ENCODE measurements at regions of chr9 and their contacts with region 1.

Region 1: DNA sequence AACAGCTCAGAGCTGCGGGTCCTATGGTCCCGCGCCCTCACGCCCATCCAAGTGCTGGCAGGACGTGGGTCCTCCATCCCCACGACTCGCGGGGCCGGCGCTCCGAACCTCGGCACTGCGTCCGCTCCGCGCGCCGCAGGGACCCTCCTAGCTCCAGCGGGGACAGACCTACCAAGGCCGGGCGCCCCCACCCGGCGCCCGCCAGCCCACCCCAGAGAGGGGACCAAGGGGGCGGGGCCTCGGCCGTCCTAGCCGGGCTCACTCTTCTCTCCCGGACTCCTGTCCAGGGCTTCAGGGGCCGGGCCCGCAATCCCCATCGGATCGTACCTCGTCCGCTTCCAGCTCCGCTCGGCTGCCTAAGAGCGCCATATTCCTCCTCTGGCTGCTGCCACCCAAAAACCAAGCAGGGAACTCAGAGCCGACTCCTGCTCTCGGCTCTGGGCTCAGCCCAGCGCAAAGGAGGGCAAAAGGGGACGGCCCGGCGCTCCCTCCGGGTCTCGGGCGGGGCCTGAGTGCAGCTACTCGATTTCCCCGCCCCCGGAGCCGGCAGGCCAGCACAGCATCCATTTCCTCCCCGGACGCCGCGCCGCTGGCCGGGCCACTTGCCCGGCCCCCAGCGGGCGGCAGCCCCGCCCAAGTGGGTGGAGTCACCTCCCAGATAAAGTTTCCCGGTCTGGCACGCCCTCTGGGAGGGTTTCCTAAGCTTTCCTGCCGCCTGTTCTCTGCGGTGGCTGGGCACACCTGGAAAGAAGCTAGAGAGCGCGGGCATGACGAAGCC is at the start of gene TTC39B:
- DNase-seq: peak; percentile 72
- ATAC-seq: peak; percentile 86
- H3K4me3 ChIP-seq: peak within 1 kb of the TSS; percentile 59 to 95 (median 88)
- H3K4me3 Mint-ChIP-seq: peak within 1 kb of the TSS; percentile 96
- H3K27ac ChIP-seq: peak within 1 kb of the TSS; percentile 29 to 78
- H3K27ac Mint-ChIP-seq: peak within 1 kb of the TSS; percentile 89
- H3K4me1 ChIP-seq: peaks cover 25 to 33% of the 10 kb centered on the region in 2 donors
- H3K4me1 Mint-ChIP-seq: peaks cover 31% of the 10 kb centered on the region
- H3K27me3 ChIP-seq: no peaks in the 10 kb centered on the region
- H3K27me3 Mint-ChIP-seq: peaks cover 3% of the 10 kb centered on the region
- CTCF ChIP-seq: no peak
- total RNA-seq, gene TTC39B: 3.6 and 3.8 TPM in 2 replicates

Region 2: DNA sequence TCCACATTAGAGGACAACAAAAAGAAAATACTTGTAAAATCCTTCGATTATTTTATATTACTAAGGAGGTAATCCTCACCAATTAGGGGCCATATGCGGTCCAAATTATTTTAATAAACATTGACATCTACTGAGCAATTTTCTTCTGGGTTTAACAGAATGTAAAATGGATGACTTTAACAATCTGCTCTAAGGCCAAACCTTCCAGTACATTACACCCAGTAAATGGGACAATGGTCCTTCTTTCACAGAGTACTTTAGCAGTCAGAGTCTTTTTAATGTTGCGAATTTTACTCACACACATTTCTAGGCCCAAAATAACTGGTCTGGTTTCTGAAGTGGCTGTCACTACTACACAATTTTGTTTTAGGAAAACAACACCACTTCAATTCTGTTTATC is 106.8 kb before region 1 on chr9:
- CTCF ChIA-PET with region 1: no interaction called
- POLR2A ChIA-PET with region 1: no interaction called
- intact Hi-C with region 1: no loop called
- DNase-seq: no peak
- ATAC-seq: no peak
- H3K4me3 ChIP-seq: no peak overlapping the region
- H3K4me3 Mint-ChIP-seq: no peak overlapping the region
- H3K27ac ChIP-seq: no peak overlapping the region
- H3K27ac Mint-ChIP-seq: no peak overlapping the region
- H3K4me1 ChIP-seq: no peaks in the 10 kb centered on the region
- H3K4me1 Mint-ChIP-seq: no peaks in the 10 kb centered on the region
- H3K27me3 ChIP-seq: no peaks in the 10 kb centered on the region
- H3K27me3 Mint-ChIP-seq: no peaks in the 10 kb centered on the region
- CTCF ChIP-seq: no peak

Region 3: GRCh38 chr9:15277400-15278090 is 29.4 kb before region 1 on chr9:
- CTCF ChIA-PET with region 1: interaction called, 14 read pairs
- POLR2A ChIA-PET with region 1: no interaction called
- intact Hi-C with region 1: no loop called
- DNase-seq: peak; percentile 54
- ATAC-seq: no peak
- H3K4me3 ChIP-seq: no peak overlapping the region
- H3K4me3 Mint-ChIP-seq: no peak overlapping the region
- H3K27ac ChIP-seq: no peak overlapping the region
- H3K27ac Mint-ChIP-seq: no peak overlapping the region
- H3K4me1 ChIP-seq: peaks cover 0 to 3% of the 10 kb centered on the region in 2 donors
- H3K4me1 Mint-ChIP-seq: peaks cover 6% of the 10 kb centered on the region
- H3K27me3 ChIP-seq: no peaks in the 10 kb centered on the region
- H3K27me3 Mint-ChIP-seq: no peaks in the 10 kb centered on the region
- CTCF ChIP-seq: peak; percentile 71

Region 4: DNA sequence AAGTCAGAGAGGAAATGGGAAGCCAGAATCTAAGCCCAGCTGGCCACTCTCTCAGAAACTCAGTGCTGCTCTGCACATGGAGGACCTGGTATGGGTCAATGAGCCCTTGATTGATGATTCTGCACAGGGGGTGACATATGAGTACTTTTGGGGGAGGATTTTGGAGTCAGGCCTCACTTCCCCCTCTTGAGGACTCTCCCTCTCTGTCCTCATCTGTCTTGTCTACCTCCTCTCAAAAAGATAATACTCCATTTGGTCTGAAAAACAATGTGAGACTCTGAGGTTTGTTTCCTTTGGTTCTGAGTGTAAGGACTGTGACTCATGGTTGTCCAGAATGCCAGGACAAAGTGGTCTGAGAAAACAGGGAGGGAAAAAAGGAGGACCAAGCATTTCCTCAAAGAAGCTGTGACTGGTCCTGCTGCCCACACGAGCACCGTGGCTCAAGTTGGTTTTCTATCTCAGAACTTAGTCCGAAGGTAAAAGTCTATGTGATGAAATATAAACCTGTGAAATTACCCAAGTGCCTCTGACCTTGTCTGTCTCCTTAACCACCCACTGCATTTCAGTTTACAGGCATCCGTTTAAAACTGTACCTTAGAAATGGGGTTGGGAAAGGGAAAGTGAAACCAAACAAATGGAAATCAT is 11.1 kb before region 1 on chr9:
- CTCF ChIA-PET with region 1: interaction called, 4 read pairs
- POLR2A ChIA-PET with region 1: interaction called, 3 read pairs
- intact Hi-C with region 1: loop called (anchors 1 kb)
- DNase-seq: peak; percentile 47
- ATAC-seq: peak; percentile 53
- H3K4me3 ChIP-seq: peak overlapping the region; percentile 18 to 67 (median 53)
- H3K4me3 Mint-ChIP-seq: peak overlapping the region; percentile 84
- H3K27ac ChIP-seq: peak overlapping the region; percentile 59 to 86
- H3K27ac Mint-ChIP-seq: peak overlapping the region; percentile 89
- H3K4me1 ChIP-seq: peaks cover 55 to 56% of the 10 kb centered on the region in 2 donors
- H3K4me1 Mint-ChIP-seq: peaks cover 55% of the 10 kb centered on the region
- H3K27me3 ChIP-seq: no peaks in the 10 kb centered on the region
- H3K27me3 Mint-ChIP-seq: no peaks in the 10 kb centered on the region
- CTCF ChIP-seq: no peak

Region 5: GRCh38 chr9:15422372-15423230 is 115.7 kb after region 1 on chr9 and contains the start of gene SNAPC3:
- CTCF ChIA-PET with region 1: no interaction called
- POLR2A ChIA-PET with region 1: interaction called, 3 read pairs
- intact Hi-C with region 1: loop called (anchors 1 kb)
- DNase-seq: peak; percentile 95
- ATAC-seq: peak; percentile 98
- H3K4me3 ChIP-seq: peak within 1 kb of the TSS; percentile 73 to 95 (median 87)
- H3K4me3 Mint-ChIP-seq: peak within 1 kb of the TSS; percentile 93
- H3K27ac ChIP-seq: peak within 1 kb of the TSS; percentile 68 to 74
- H3K27ac Mint-ChIP-seq: peak within 1 kb of the TSS; percentile 84
- H3K4me1 ChIP-seq: peaks cover 32 to 34% of the 10 kb centered on the region in 2 donors
- H3K4me1 Mint-ChIP-seq: peaks cover 39% of the 10 kb centered on the region
- H3K27me3 ChIP-seq: no peaks in the 10 kb centered on the region
- H3K27me3 Mint-ChIP-seq: no peaks in the 10 kb centered on the region
- CTCF ChIP-seq: no peak
- total RNA-seq, gene SNAPC3: 48.3 and 52.1 TPM in 2 replicates

Region 6: GRCh38 chr9:15552636-15553527 is 245.9 kb after region 1 on chr9 and contains the start of gene CCDC171:
- CTCF ChIA-PET with region 1: no interaction called
- POLR2A ChIA-PET with region 1: interaction called, 4 read pairs
- intact Hi-C with region 1: loop called (anchors 2 kb)
- DNase-seq: peak; percentile 91
- ATAC-seq: peak; percentile 81
- H3K4me3 ChIP-seq: peak within 1 kb of the TSS; percentile 75 to 96 (median 83)
- H3K4me3 Mint-ChIP-seq: peak within 1 kb of the TSS; percentile 98
- H3K27ac ChIP-seq: peak within 1 kb of the TSS; percentile 40 to 52
- H3K27ac Mint-ChIP-seq: peak within 1 kb of the TSS; percentile 90
- H3K4me1 ChIP-seq: peaks cover 13 to 18% of the 10 kb centered on the region in 2 donors
- H3K4me1 Mint-ChIP-seq: peaks cover 17% of the 10 kb centered on the region
- H3K27me3 ChIP-seq: peaks cover 0 to 3% (median 0%) of the 10 kb centered on the region in 4 experiments
- H3K27me3 Mint-ChIP-seq: no peaks in the 10 kb centered on the region
- CTCF ChIP-seq: peak; percentile 8
- total RNA-seq, gene CCDC171: 5.1 and 6.3 TPM in 2 replicates

Measured in B cell (primary cell).